IMR-90 (cell line): ENCODE measurements at regions of chr6 and their contacts with region 1.

Region 1: GRCh38 chr6:161273752-161274487 is at the start of gene AGPAT4:
- DNase-seq: peak; percentile 98
- ATAC-seq: peak; percentile 97
- H3K4me3 ChIP-seq: peak within 1 kb of the TSS; percentile 68
- H3K27ac ChIP-seq: peak within 1 kb of the TSS; percentile 70
- H3K4me1 ChIP-seq: 0 out of 2 replicates have a peak, but pooled peaks cover 1% of the 10 kb centered on the region
- H3K27me3 ChIP-seq: no peaks in the 10 kb centered on the region
- CTCF ChIP-seq: no peak
- POLR2A ChIP-seq: peak; percentile 96
- RAD21 ChIP-seq: peak; percentile 8; the same call in 1 of the 2 replicates
- total RNA-seq, gene AGPAT4: 3.6 and 3.8 TPM in 2 replicates

Region 2: GRCh38 chr6:160972111-160972510 is 301.8 kb before region 1 on chr6:
- CTCF ChIA-PET with region 1: no interaction called
- POLR2A ChIA-PET with region 1: no interaction called
- dilution Hi-C with region 1: no loop called
- in situ Hi-C with region 1: loop called (anchors 25 kb)
- intact Hi-C with region 1: loop called (anchors 5 kb)
- DNase-seq: peak; percentile 97
- ATAC-seq: peak; percentile 62
- H3K4me3 ChIP-seq: no peak overlapping the region
- H3K27ac ChIP-seq: peak overlapping the region; percentile 72; the same call in 1 of the 2 replicates
- H3K4me1 ChIP-seq: peaks cover 25% of the 10 kb centered on the region
- H3K27me3 ChIP-seq: peaks cover 1% of the 10 kb centered on the region; the same call in 1 of the 2 replicates
- CTCF ChIP-seq: no peak
- POLR2A ChIP-seq: no peak
- RAD21 ChIP-seq: no peak

Region 3: GRCh38 chr6:161101517-161101916 is 172.4 kb before region 1 on chr6:
- CTCF ChIA-PET with region 1: no interaction called
- POLR2A ChIA-PET with region 1: no interaction called
- dilution Hi-C with region 1: no loop called
- in situ Hi-C with region 1: no loop called
- intact Hi-C with region 1: loop called (anchors 5 kb)
- DNase-seq: peak; percentile 17
- ATAC-seq: no peak
- H3K4me3 ChIP-seq: no peak overlapping the region
- H3K27ac ChIP-seq: no peak overlapping the region
- H3K4me1 ChIP-seq: peaks cover 2% of the 10 kb centered on the region; the same call in 1 of the 2 replicates
- H3K27me3 ChIP-seq: no peaks in the 10 kb centered on the region
- CTCF ChIP-seq: peak; percentile 40
- POLR2A ChIP-seq: no peak
- RAD21 ChIP-seq: peak; percentile 57

Region 4: GRCh38 chr6:161168281-161168891 is 105.5 kb before region 1 on chr6:
- CTCF ChIA-PET with region 1: interaction called, 3 read pairs
- POLR2A ChIA-PET with region 1: no interaction called
- dilution Hi-C with region 1: no loop called
- in situ Hi-C with region 1: loop called (anchors 10 kb)
- intact Hi-C with region 1: no loop called
- DNase-seq: peak; percentile 99
- ATAC-seq: peak; percentile 92
- H3K4me3 ChIP-seq: no peak overlapping the region
- H3K27ac ChIP-seq: peak overlapping the region; percentile 49
- H3K4me1 ChIP-seq: peaks cover 9% of the 10 kb centered on the region
- H3K27me3 ChIP-seq: no peaks in the 10 kb centered on the region
- CTCF ChIP-seq: no peak
- POLR2A ChIP-seq: no peak
- RAD21 ChIP-seq: peak; percentile 23

Region 5: DNA sequence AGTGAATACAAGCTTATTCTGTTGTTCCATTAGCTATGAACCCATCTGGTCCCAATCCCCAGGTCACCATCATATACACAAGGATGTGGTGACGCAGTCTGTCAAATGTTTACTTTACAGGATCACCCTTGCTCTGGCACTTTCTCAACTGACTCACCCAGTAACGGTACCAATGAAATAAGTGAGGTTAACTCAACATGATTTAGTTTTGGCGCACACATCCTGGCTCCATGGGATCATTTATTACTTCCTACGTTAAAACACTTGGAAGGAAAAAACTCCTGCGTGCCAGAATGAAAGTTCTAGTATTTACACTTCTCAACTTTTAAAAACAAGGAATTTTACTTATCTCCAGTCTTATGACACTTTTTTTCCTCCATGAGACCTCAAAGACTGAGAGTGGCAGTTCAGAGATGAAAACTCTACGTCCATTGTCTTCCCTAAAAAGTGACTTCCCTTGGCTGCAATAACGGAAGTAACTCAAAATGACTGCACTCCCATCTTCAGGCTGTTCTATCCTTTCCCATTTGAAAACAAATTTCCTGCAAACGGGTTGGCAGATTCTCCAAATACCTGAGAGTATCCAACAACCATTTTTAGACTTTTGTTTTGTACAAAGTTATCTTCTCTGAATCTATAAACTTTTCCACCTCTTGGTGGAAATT is 16.0 kb before region 1 on chr6:
- CTCF ChIA-PET with region 1: interaction called, 5 read pairs
- POLR2A ChIA-PET with region 1: interaction called, 3 read pairs
- dilution Hi-C with region 1: no loop called
- in situ Hi-C with region 1: no loop called
- intact Hi-C with region 1: loop called (anchors 2 kb)
- DNase-seq: peak; percentile 99
- ATAC-seq: peak; percentile 77
- H3K4me3 ChIP-seq: no peak overlapping the region; the same call in 1 of the 2 replicates
- H3K27ac ChIP-seq: peak overlapping the region; percentile 56; the same call in 1 of the 2 replicates
- H3K4me1 ChIP-seq: peaks cover 12% of the 10 kb centered on the region
- H3K27me3 ChIP-seq: no peaks in the 10 kb centered on the region
- CTCF ChIP-seq: 0 out of 2 replicates have a peak, but pooled peaks have one; percentile 2
- POLR2A ChIP-seq: peak; percentile 25; the same call in 1 of the 2 replicates
- RAD21 ChIP-seq: peak; percentile 15; the same call in 1 of the 2 replicates

Region 6: DNA sequence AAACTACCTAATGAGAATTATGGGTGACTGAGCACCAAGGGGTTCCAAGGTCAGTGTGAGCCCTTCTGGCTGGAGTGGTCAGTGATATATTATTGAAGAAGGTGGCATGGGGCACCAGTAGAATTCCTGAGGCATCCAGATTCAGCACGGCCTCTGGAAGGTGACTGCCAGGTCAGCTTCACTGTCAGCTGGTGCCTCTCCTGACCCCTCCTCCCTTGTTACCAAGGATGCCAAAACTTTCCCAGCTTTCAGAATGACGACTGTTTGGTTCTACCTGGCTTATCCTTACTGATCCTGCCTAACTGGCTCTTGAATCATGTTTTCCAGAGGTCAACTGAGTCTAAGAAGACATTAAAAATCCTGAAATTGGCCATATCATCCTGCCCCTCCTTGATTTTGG is 189.1 kb after region 1 on chr6:
- CTCF ChIA-PET with region 1: no interaction called
- POLR2A ChIA-PET with region 1: no interaction called
- dilution Hi-C with region 1: no loop called
- in situ Hi-C with region 1: no loop called
- intact Hi-C with region 1: no loop called
- DNase-seq: no peak
- ATAC-seq: no peak
- H3K4me3 ChIP-seq: no peak overlapping the region
- H3K27ac ChIP-seq: no peak overlapping the region
- H3K4me1 ChIP-seq: no peaks in the 10 kb centered on the region
- H3K27me3 ChIP-seq: no peaks in the 10 kb centered on the region
- CTCF ChIP-seq: no peak
- POLR2A ChIP-seq: no peak
- RAD21 ChIP-seq: no peak